Psoas muscle (tissue), 8 donors: ENCODE measurements at regions of chr4 and their contacts with region 1.

Region 1: DNA sequence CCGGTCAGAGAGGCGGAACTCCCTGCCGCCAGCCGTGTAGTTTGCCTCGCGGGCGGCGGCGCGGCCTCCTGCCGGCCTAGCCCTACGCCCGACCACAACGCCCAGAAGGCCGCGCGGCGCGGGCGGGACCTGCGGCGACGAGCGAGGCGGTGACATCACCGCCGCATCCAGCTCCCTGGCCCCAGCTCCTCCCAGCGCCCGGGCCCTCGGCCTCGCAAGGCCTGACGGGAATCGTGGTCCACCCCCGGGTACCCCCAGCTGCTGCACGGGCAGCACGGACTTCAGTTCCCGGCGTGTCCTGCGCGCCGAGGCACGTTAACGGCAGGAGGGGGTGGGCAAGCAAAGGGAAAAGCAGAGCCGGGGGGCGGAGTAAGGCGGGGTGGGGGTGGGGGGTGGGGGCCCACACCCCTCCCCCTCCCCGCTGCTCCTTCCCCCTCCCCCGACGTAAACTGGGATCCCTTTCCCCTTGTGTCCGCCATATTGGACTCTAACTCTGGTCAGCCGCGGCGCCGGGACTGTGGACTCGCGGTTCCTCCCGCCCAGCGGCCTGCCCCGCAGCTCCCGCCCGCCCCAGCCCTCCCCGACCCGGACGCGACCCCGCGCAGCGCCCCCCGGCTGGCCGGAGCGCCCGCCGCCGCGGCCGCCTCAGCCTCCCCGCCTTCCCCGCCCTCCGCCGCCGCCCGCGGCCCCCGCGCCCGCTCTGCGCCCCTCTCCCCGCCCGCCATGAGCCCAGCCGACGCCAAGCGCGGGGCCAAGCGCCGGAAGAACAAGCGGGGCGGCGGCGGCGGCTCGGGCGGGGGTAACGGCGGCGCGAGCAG is at the start of gene FAM193A:
- DNase-seq: peak; percentile 99 to 100
- ATAC-seq: peak; percentile 94 to 96 (median 96)
- H3K4me3 ChIP-seq: peak within 1 kb of the TSS; percentile 95
- H3K27ac ChIP-seq: peak within 1 kb of the TSS; percentile 95
- H3K4me1 ChIP-seq: peaks cover 39% of the 10 kb centered on the region
- H3K27me3 ChIP-seq: no peaks in the 10 kb centered on the region
- CTCF ChIP-seq: no peak
- total RNA-seq, gene FAM193A: 14.6 to 20.0 (median 17.9) TPM

Region 2: GRCh38 chr4:2468445-2469192 is 67.8 kb before region 1 on chr4 and contains the start of gene RNF4:
- intact Hi-C with region 1: loop called (anchors 5 to 10 kb)
- DNase-seq: peak; percentile 97 to 98
- ATAC-seq: peak; percentile 92 to 97 (median 94)
- H3K4me3 ChIP-seq: peak within 1 kb of the TSS; percentile 95
- H3K27ac ChIP-seq: peak within 1 kb of the TSS; percentile 95
- H3K4me1 ChIP-seq: peaks cover 28% of the 10 kb centered on the region
- H3K27me3 ChIP-seq: no peaks in the 10 kb centered on the region
- CTCF ChIP-seq: no peak
- total RNA-seq, gene RNF4: 20.1 to 37.7 (median 31.3) TPM

Region 3: DNA sequence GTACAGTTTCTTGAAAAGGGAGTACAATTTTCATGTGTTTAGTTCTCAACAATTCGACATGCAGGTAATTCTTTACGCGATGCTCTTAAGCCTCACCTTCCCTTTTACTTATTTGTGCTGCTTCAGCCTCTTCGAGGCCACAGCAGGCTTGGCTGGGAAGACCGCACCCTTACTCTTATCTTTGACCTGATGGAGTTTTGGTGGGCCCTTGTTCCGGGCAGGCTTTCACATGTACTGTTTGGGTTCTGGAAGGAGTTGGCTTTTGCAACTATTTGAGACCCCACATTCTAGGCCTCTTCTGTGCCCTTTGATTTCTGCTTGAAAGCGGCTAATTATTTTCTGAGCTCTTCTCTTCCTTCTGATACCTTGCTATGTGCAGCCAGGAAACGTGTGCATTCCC is 60.2 kb after region 1 on chr4:
- intact Hi-C with region 1: loop called in 1 of 2 experiments (anchors 1 kb)
- DNase-seq: no peak
- ATAC-seq: no peak
- H3K4me3 ChIP-seq: no peak overlapping the region
- H3K27ac ChIP-seq: peak overlapping the region; percentile 77
- H3K4me1 ChIP-seq: peaks cover 69% of the 10 kb centered on the region
- H3K27me3 ChIP-seq: no peaks in the 10 kb centered on the region
- CTCF ChIP-seq: no peak

Region 4: DNA sequence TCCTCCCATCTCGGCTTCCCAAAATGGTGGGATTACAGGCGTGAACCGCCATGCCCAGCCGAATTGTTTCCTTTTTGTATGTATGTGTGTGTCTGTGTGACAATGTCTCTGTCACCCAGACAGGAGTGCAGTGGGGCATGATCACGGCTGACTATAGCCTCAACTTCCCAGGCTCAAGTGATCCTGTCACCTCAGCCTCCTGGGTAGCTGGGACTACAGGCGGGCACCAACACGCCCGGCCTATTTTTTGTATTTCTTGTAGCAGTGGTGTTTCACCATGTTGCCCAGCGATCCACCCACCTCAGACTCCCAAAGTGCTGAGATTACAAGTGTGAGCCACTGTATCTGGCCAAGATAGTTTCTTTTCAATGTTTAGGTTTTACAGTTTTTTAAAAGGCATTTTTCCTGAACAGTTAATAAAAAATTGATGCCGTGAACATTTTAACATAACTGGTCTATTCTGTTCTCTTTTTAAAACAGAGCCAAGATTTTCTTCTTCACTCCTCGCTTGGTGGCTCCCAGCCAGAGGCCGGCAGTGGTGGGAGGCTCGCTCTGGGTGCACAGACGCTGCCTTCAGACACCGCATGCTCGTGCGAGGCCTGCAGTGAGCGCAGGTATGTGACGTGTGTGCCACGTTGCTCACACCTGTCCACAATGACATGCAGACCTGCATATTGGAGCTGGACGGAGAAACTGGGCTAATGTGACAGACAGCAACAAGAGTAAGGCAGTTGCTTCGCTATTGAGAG is 88.6 kb after region 1 on chr4:
- intact Hi-C with region 1: no loop called
- DNase-seq: no peak
- ATAC-seq: no peak
- H3K4me3 ChIP-seq: no peak overlapping the region
- H3K27ac ChIP-seq: no peak overlapping the region
- H3K4me1 ChIP-seq: peaks cover 16% of the 10 kb centered on the region
- H3K27me3 ChIP-seq: no peaks in the 10 kb centered on the region
- CTCF ChIP-seq: no peak